Heart left ventricle (tissue), 16 donors: ENCODE measurements at regions of chr12 and their contacts with region 1.

Region 1: DNA sequence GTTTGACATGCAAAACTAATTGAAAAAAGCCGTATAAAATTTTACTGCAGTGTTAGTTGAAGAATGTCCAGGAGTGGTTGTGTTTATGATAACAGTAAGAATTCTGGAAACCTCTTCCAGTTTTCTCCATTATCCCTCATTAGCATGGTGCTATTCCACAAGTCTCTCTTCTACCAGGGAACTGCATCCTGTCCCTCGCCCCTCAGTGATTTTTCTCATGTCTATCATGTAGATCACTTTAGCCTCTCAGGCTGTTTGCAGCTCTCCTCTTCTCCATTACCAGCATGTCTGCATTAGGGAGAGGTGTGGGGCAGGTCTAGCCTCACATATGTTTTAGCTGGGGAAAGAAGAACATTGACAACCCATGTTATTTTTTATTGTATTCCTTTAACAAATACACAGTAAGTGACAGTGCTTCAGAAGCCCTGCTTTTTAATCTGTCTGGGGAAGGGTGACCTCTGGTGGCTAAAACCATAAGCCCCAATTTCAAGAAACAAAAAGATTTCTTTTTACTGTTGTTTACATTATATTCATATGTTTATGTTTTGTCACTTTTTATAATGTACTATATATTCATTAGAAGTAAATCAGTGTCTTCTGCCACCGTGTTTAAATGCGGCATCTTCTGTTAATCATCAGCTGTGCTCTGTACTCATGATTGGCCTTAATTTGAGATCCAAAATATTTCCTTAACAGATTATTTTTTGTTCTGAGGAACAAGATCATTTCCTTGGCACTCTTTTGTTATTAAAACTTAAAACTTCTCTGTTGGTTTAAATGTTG is 70.7 kb downstream of the RASSF8 start:
- DNase-seq: no peak
- ATAC-seq: peak in 3 of 4 donors; percentile 55 to 70 (median 56)
- H3K4me3 ChIP-seq: no peak overlapping the region
- H3K27ac ChIP-seq: peak overlapping the region in 2 of 12 donors; percentile 13 to 38
- H3K4me1 ChIP-seq: peaks cover 0 to 45% (median 11%) of the 10 kb centered on the region in 12 donors
- H3K27me3 ChIP-seq: no peaks in the 10 kb centered on the region
- CTCF ChIP-seq: peak; percentile 78 to 94 (median 88)
- POLR2A ChIP-seq: no peak

Region 2: GRCh38 chr12:25436203-25437030 is 592.7 kb before region 1 on chr12:
- intact Hi-C with region 1: loop called (anchors 2 to 5 kb)
- DNase-seq: peak in 1 of 5 donors; percentile 29
- ATAC-seq: peak in 3 of 4 donors; percentile 63 to 78 (median 70)
- H3K4me3 ChIP-seq: peak overlapping the region in 9 of 12 donors; percentile 30 to 48 (median 35)
- H3K27ac ChIP-seq: no peak overlapping the region
- H3K4me1 ChIP-seq: peaks cover 0 to 12% (median 0%) of the 10 kb centered on the region in 12 donors
- H3K27me3 ChIP-seq: no peaks in the 10 kb centered on the region
- CTCF ChIP-seq: peak; percentile 74 to 88 (median 79)
- POLR2A ChIP-seq: no peak

Region 3: GRCh38 chr12:25583545-25583944 is 445.6 kb before region 1 on chr12:
- intact Hi-C with region 1: loop called in 1 of 10 experiments (anchors 10 kb)
- DNase-seq: peak in 2 of 5 donors; percentile 14 to 30
- ATAC-seq: peak in 3 of 4 donors; percentile 41 to 84 (median 43)
- H3K4me3 ChIP-seq: no peak overlapping the region
- H3K27ac ChIP-seq: no peak overlapping the region
- H3K4me1 ChIP-seq: peaks cover 0 to 15% (median 0%) of the 10 kb centered on the region in 12 donors
- H3K27me3 ChIP-seq: no peaks in the 10 kb centered on the region
- CTCF ChIP-seq: peak in 5 of 12 donors; percentile 6 to 27 (median 18)
- POLR2A ChIP-seq: no peak

Region 4: GRCh38 chr12:25677232-25677937 is 351.8 kb before region 1 on chr12:
- intact Hi-C with region 1: loop called in 3 of 10 experiments (anchors 5 to 10 kb)
- DNase-seq: no peak
- ATAC-seq: peak in 2 of 4 donors; percentile 34 to 56
- H3K4me3 ChIP-seq: no peak overlapping the region
- H3K27ac ChIP-seq: no peak overlapping the region
- H3K4me1 ChIP-seq: no peaks in the 10 kb centered on the region
- H3K27me3 ChIP-seq: no peaks in the 10 kb centered on the region
- CTCF ChIP-seq: peak in 4 of 12 donors; percentile 25 to 48 (median 36)
- POLR2A ChIP-seq: no peak

Region 5: GRCh38 chr12:25689996-25690501 is 339.1 kb before region 1 on chr12:
- intact Hi-C with region 1: loop called in 1 of 10 experiments (anchors 10 kb)
- DNase-seq: peak in 4 of 5 donors; percentile 34 to 67 (median 56)
- ATAC-seq: peak in 2 of 4 donors; percentile 44 to 60
- H3K4me3 ChIP-seq: no peak overlapping the region
- H3K27ac ChIP-seq: no peak overlapping the region
- H3K4me1 ChIP-seq: no peaks in the 10 kb centered on the region
- H3K27me3 ChIP-seq: no peaks in the 10 kb centered on the region
- CTCF ChIP-seq: no peak
- POLR2A ChIP-seq: no peak

Region 6: DNA sequence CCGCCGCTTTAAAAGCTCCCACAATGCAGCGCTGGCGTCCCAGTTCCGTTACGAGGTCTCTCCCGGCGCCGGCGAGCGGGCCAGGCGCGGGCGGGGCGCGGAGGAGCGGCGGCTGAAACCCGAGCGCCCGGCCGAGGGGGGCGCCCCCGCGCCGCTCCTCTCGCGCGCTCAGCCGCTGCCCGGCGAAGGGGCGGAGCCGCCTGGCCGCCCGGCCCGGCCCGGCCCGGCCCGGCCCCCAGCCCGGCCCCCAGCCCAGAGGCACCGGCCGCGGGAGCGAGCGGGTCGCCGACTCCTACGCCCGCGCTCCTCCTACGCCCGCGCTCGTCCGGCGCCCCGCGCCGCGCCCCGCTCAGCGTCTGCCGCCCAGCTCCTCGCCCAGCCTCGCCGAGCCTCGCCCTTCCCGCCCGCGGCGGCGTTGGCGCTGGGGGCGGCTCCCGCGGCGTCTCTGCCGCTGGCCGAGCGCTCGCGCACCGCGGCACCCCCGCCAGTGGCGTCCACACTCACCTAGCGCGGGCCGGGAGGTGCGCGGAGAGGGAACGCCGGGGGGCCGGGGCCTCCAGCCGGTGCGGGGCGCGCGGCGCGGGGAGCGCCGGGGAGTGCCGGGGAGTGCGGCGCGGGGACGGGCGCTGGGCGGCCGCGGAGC is 70.6 kb before region 1 on chr12 and contains the start of gene RASSF8:
- intact Hi-C with region 1: loop called in 1 of 10 experiments (anchors 5 kb)
- DNase-seq: peak; percentile 80 to 88 (median 84)
- ATAC-seq: peak; percentile 75 to 96 (median 88)
- H3K4me3 ChIP-seq: peak within 1 kb of the TSS; percentile 72 to 98 (median 82)
- H3K27ac ChIP-seq: peak within 1 kb of the TSS; percentile 84 to 98 (median 96)
- H3K4me1 ChIP-seq: peaks cover 0 to 41% (median 20%) of the 10 kb centered on the region in 12 donors
- H3K27me3 ChIP-seq: peaks cover 0 to 3% (median 0%) of the 10 kb centered on the region in 9 donors
- CTCF ChIP-seq: peak in 3 of 12 donors; percentile 6 to 22 (median 17)
- POLR2A ChIP-seq: peak in 1 of 2 donors; percentile 50
- total RNA-seq, gene RASSF8: 20.6 to 44.6 (median 30.9) TPM

Region 7: GRCh38 chr12:26044012-26044383 is 14.9 kb after region 1 on chr12:
- intact Hi-C with region 1: no loop called
- DNase-seq: no peak
- ATAC-seq: no peak
- H3K4me3 ChIP-seq: no peak overlapping the region
- H3K27ac ChIP-seq: no peak overlapping the region
- H3K4me1 ChIP-seq: peaks cover 0 to 48% (median 6%) of the 10 kb centered on the region in 12 donors
- H3K27me3 ChIP-seq: no peaks in the 10 kb centered on the region
- CTCF ChIP-seq: no peak
- POLR2A ChIP-seq: no peak